Naive thymus-derived CD4-positive, alpha-beta T cell (primary cell): ENCODE measurements at regions of chr14 and their contacts with region 1.

Region 1: GRCh38 chr14:71021347-71022014 is 114.2 kb downstream of the PCNX1 start:
- DNase-seq: no peak
- ATAC-seq: no peak
- H3K4me3 ChIP-seq: no peak overlapping the region
- H3K4me3 Mint-ChIP-seq: peak overlapping the region in 3 of 10 donors; percentile 46 to 66 (median 51)
- H3K27ac ChIP-seq: no peak overlapping the region
- H3K27ac Mint-ChIP-seq: peak overlapping the region in 7 of 9 donors; percentile 4 to 80 (median 44)
- H3K4me1 ChIP-seq: peaks cover 3 to 8% of the 10 kb centered on the region in 2 donors
- H3K4me1 Mint-ChIP-seq: peaks cover 14 to 35% (median 28%) of the 10 kb centered on the region in 7 donors
- H3K27me3 ChIP-seq: no peaks in the 10 kb centered on the region
- H3K27me3 Mint-ChIP-seq: no peaks in the 10 kb centered on the region

Region 2: GRCh38 chr14:71001742-71002141 is 19.7 kb before region 1 on chr14:
- CTCF ChIA-PET with region 1: no interaction called
- POLR2A ChIA-PET with region 1: no interaction called
- intact Hi-C with region 1: loop called in 1 of 2 experiments (anchors 2 kb)
- DNase-seq: no peak
- ATAC-seq: no peak
- H3K4me3 ChIP-seq: no peak overlapping the region
- H3K4me3 Mint-ChIP-seq: peak overlapping the region in 3 of 10 donors; percentile 38 to 60 (median 58)
- H3K27ac ChIP-seq: peak overlapping the region; percentile 2
- H3K27ac Mint-ChIP-seq: peak overlapping the region in 7 of 9 donors; percentile 14 to 90 (median 81)
- H3K4me1 ChIP-seq: peaks cover 59 to 64% of the 10 kb centered on the region in 2 donors
- H3K4me1 Mint-ChIP-seq: peaks cover 24 to 90% (median 86%) of the 10 kb centered on the region in 7 donors
- H3K27me3 ChIP-seq: no peaks in the 10 kb centered on the region
- H3K27me3 Mint-ChIP-seq: no peaks in the 10 kb centered on the region

Region 3: GRCh38 chr14:71011479-71011878 is 10.0 kb before region 1 on chr14:
- CTCF ChIA-PET with region 1: no interaction called
- POLR2A ChIA-PET with region 1: no interaction called
- intact Hi-C with region 1: loop called in 1 of 2 experiments (anchors 2 kb)
- DNase-seq: peak in 3 of 9 donors; percentile 16 to 24 (median 21)
- ATAC-seq: no peak
- H3K4me3 ChIP-seq: no peak overlapping the region
- H3K4me3 Mint-ChIP-seq: peak overlapping the region in 3 of 10 donors; percentile 6 to 54 (median 36)
- H3K27ac ChIP-seq: no peak overlapping the region
- H3K27ac Mint-ChIP-seq: peak overlapping the region in 6 of 9 donors; percentile 19 to 72 (median 48)
- H3K4me1 ChIP-seq: peaks cover 0 to 24% of the 10 kb centered on the region in 2 donors
- H3K4me1 Mint-ChIP-seq: peaks cover 12 to 67% (median 58%) of the 10 kb centered on the region in 7 donors
- H3K27me3 ChIP-seq: no peaks in the 10 kb centered on the region
- H3K27me3 Mint-ChIP-seq: no peaks in the 10 kb centered on the region

Region 4: DNA sequence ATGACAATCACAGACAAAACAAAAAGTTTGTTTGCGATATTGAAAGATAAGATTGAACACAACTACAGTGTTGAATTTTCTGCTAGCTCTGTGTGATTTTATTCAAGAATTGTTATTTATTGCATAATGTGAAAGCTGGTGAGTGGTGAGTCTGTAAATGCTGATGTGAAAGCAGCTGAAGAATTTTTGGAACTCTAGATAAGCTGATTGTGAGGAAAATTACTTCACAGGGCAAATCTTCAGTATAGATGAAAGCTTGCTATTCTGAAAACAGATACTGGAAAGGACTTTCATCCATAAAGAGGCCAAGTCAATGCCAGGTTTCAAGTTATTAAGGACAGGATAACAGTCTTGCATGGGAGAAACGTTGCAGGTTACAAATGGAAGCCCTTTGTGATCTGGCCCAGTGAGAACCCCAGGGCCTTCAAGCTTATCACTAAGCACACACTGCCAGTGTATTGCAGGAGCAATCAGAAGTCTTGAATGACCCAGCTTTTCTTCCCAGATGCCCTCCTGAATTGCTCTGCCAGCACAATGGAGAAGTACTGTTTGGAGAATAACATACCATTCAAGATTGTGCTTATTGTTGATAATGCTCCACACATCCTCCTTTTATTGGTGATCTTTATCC is 39.5 kb after region 1 on chr14:
- CTCF ChIA-PET with region 1: no interaction called
- POLR2A ChIA-PET with region 1: no interaction called
- intact Hi-C with region 1: no loop called
- DNase-seq: no peak
- ATAC-seq: no peak
- H3K4me3 ChIP-seq: no peak overlapping the region
- H3K4me3 Mint-ChIP-seq: no peak overlapping the region
- H3K27ac ChIP-seq: no peak overlapping the region
- H3K27ac Mint-ChIP-seq: peak overlapping the region in 2 of 9 donors; percentile 3 to 46
- H3K4me1 ChIP-seq: no peaks in the 10 kb centered on the region
- H3K4me1 Mint-ChIP-seq: peaks cover 0 to 25% (median 11%) of the 10 kb centered on the region in 7 donors
- H3K27me3 ChIP-seq: no peaks in the 10 kb centered on the region
- H3K27me3 Mint-ChIP-seq: no peaks in the 10 kb centered on the region